Activated CD8-positive, alpha-beta T cell treated with anti-CD3 and anti-CD28 coated beads, Interleukin-2, amount 10 ng/mL, durations not matched to agents 7 days and 5 days (primary cell): ENCODE measurements at regions of chr2 and their contacts with region 1.

Region 1: DNA sequence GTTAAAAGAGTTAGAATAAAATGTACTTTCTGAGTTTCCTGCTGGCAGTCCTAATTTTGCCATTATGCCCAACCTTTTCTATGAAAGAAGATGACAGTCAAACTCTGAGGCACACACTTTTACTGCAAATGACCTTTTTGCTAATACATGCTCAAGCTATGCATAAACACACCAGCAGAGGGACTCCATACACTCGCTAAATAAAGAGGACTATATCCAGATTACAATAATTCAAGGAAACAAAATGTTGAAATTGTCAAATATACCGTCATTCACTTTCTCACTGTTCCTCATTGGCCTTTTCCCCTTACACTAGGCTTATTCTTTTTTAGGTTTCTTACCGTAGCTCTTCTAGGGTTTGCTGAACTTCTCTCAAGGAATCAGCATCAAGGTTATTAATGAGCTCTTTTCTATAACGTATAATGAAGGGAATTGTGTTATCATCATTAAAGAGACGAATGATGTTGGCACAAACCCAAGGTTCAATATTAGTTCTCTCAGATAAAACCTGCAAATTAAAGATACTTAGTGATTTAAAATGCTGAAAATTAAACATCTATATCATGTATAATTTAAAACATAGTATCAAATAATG is 25.7 kb downstream of the SRBD1 start:
- DNase-seq: peak; percentile 47
- ATAC-seq: peak; percentile 62
- H3K4me3 Mint-ChIP-seq: no peak overlapping the region
- H3K27ac Mint-ChIP-seq: no peak overlapping the region
- H3K4me1 Mint-ChIP-seq: peaks cover 19% of the 10 kb centered on the region
- H3K27me3 Mint-ChIP-seq: no peaks in the 10 kb centered on the region

Region 2: DNA sequence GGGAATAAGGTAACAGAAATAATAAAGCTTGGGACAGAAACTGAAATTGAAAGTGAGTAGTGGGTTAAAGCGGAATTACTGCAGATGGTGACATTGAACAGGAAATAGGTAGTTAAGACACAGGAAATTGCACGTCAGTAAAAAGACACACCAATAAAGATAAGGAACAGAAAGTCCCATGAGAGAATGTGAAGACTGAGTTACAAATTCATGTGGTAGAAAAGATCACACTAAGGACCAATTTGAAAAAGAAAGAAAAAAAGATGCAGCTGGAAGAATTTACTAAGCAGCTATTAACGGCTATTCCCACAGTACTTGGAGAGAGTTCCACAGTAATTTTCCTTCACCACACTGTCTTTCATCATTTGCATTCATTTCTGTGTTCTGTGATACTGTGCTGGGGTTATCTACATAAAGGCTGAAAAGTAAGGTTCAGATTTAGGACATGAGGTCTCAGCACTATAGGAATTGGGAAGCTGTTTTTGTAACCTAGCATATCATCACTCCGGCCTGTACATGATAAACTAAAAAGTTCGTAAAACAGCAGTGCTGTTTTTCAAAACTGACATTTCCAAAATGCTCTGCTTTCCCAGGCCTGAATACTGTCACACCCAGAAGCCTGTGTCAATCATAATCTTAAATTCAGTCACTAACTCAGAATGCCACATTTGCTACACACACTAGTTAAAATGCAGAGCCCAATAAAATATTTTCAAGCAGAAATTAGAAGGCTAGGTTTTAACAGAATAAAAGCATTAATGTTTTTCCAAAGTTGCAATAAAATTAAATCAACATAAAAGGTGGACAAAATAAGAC is 17.2 kb before region 1 on chr2:
- CTCF ChIA-PET with region 1: interaction called, 17 read pairs
- POLR2A ChIA-PET with region 1: interaction called, 3 read pairs
- DNase-seq: peak; percentile 35
- ATAC-seq: peak; percentile 96
- H3K4me3 Mint-ChIP-seq: peak overlapping the region; percentile 84
- H3K27ac Mint-ChIP-seq: peak overlapping the region; percentile 93
- H3K4me1 Mint-ChIP-seq: peaks cover 21% of the 10 kb centered on the region
- H3K27me3 Mint-ChIP-seq: no peaks in the 10 kb centered on the region

Region 3: GRCh38 chr2:45611020-45611737 is 25.8 kb after region 1 on chr2 and contains the start of gene SRBD1:
- CTCF ChIA-PET with region 1: interaction called, 12 read pairs
- POLR2A ChIA-PET with region 1: interaction called, 3 read pairs
- DNase-seq: peak; percentile 93
- ATAC-seq: peak; percentile 94
- H3K4me3 Mint-ChIP-seq: peak within 1 kb of the TSS; percentile 97
- H3K27ac Mint-ChIP-seq: peak within 1 kb of the TSS; percentile 95
- H3K4me1 Mint-ChIP-seq: peaks cover 23% of the 10 kb centered on the region
- H3K27me3 Mint-ChIP-seq: no peaks in the 10 kb centered on the region
- total RNA-seq, gene SRBD1: 19.2 to 22.7 TPM

Region 4: GRCh38 chr2:45935791-45936622 is 350.6 kb after region 1 on chr2:
- CTCF ChIA-PET with region 1: interaction called, 10 read pairs
- POLR2A ChIA-PET with region 1: no interaction called
- DNase-seq: peak; percentile 65
- ATAC-seq: peak; percentile 79
- H3K4me3 Mint-ChIP-seq: no peak overlapping the region
- H3K27ac Mint-ChIP-seq: no peak overlapping the region
- H3K4me1 Mint-ChIP-seq: peaks cover 7% of the 10 kb centered on the region
- H3K27me3 Mint-ChIP-seq: no peaks in the 10 kb centered on the region